ENCODE measurements at regions of chr18 and their contacts with region 1.

Region 1: GRCh38 chr18:74342416-74343043 is 26.9 kb downstream of the C18orf63 start:
- DNase-seq: peak in 1 of 10 donors; percentile 11
- H3K4me3 ChIP-seq: no peak overlapping the region
- H3K27ac ChIP-seq: no peak overlapping the region
- H3K27me3 ChIP-seq: no peaks in the 10 kb centered on the region
- CTCF ChIP-seq: peak; percentile 51 to 94 (median 80)

Region 2: DNA sequence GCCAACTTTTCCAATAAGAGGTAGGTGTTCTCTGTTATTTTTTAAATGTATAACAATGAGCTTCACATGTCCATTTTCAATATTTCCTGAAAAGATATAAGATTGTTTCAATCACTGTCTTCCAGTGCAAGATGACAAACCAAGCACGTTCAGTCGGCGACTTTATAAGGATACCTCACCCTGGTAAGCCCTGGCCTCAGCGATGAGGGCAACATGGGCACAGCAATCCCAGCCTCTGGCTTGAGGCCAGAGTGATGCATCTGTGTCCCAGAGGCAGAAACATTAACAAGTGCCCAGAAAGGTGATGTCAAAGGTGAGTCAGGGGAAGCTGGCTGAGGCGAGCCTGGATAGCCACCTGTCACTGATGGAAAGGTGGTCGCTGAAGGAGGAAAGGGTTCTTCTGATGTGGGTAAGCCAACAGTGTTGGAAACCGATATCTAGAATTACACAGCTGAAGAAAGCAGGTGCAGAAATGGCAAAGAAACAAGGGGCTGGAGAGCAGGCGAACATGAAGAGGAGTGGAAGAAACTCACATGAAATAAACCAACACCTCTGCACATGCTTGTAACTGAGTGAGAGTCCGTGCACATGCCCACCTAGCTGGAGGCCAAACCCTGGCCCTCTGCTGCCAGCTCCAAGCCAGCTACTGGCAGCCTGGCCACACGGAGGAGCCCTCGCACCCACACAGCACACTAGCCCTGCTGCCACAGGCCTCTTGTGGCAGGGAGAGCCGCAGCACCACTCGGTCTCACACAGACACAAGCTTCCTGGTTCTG is 260.4 kb before region 1 on chr18:
- intact Hi-C with region 1: loop called in 1 of 2 experiments (anchors 2 kb)
- DNase-seq: peak in 8 of 10 donors; percentile 54 to 78 (median 66)
- H3K4me3 ChIP-seq: peak overlapping the region in 15 of 59 donors; percentile 7 to 45 (median 29)
- H3K27ac ChIP-seq: peak overlapping the region in 27 of 59 donors; percentile 1 to 74 (median 47)
- H3K27me3 ChIP-seq: no peaks in the 10 kb centered on the region
- CTCF ChIP-seq: peak in 54 of 56 donors; percentile 14 to 82 (median 58)

Region 3: DNA sequence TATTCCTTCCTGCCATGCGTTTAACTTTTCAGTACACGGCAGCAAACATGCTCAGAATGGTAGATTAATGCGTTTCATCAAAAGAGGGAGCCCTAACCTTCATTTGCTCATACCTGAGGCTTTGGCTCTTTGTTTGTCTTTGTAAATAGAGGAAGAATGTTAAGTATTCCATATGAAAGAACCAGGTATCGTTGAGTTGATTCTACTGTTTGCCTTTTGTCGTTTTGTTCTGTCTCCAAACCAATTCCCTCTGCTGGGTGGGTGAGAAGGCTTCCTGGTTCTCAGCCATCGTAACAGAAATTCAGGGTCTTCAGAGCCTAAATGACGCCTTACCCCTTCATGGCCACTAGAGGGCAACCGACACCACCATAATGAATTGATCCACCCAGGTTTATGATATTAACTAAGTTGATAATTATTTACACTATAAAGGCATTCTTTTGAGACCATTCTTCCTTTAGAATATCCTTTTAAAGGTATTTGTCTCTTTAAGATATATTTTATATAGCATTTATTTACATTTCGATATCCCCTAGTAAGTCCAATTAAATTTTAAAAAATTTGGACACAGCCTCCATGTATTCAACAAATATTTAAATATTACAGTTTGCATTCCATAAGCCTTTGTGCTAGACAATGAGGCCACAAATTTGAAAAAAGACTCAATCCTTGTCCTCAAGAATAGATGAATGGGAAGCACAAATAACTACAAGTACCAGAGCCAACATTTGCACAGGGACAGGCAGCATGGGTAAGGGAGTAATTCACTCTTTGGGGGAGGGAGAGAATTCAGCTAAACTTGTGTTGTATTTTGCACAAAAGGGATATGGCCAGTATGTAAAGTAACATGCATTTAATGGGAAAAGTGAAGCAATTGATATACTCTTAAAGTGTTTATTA is 146.1 kb before region 1 on chr18:
- intact Hi-C with region 1: loop called (anchors 2 kb)
- DNase-seq: peak in 3 of 10 donors; percentile 50 to 54 (median 50)
- H3K4me3 ChIP-seq: peak overlapping the region in 41 of 59 donors; percentile 1 to 58 (median 35)
- H3K27ac ChIP-seq: peak overlapping the region in 1 of 59 donors; percentile 29
- H3K27me3 ChIP-seq: no peaks in the 10 kb centered on the region
- CTCF ChIP-seq: peak; percentile 82 to 99 (median 93)

Region 4: GRCh38 chr18:74242438-74243096 is 100.0 kb before region 1 on chr18:
- intact Hi-C with region 1: loop called in 1 of 2 experiments (anchors 5 kb)
- DNase-seq: peak in 1 of 10 donors; percentile 39
- H3K4me3 ChIP-seq: no peak overlapping the region
- H3K27ac ChIP-seq: no peak overlapping the region
- H3K27me3 ChIP-seq: no peaks in the 10 kb centered on the region
- CTCF ChIP-seq: peak in 23 of 56 donors; percentile 7 to 52 (median 33)

Measured in dorsolateral prefrontal cortex (tissue), 120 donors.